CD8-positive, alpha-beta T cell (primary cell): ENCODE measurements at regions of chr13 and their contacts with region 1.

Region 1: GRCh38 chr13:48492470-48493065 is 40.3 kb downstream of the RCBTB2 start:
- DNase-seq: peak; percentile 27 to 92 (median 73)
- ATAC-seq: peak; percentile 82
- H3K4me3 ChIP-seq: peak overlapping the region; percentile 48 to 60
- H3K4me3 Mint-ChIP-seq: no peak overlapping the region
- H3K27ac ChIP-seq: peak overlapping the region; percentile 63 to 86
- H3K27ac Mint-ChIP-seq: no peak overlapping the region
- H3K4me1 ChIP-seq: peaks cover 58% of the 10 kb centered on the region
- H3K4me1 Mint-ChIP-seq: peaks cover 39% of the 10 kb centered on the region
- H3K27me3 ChIP-seq: no peaks in the 10 kb centered on the region
- H3K27me3 Mint-ChIP-seq: no peaks in the 10 kb centered on the region
- CTCF ChIP-seq: no peak

Region 2: DNA sequence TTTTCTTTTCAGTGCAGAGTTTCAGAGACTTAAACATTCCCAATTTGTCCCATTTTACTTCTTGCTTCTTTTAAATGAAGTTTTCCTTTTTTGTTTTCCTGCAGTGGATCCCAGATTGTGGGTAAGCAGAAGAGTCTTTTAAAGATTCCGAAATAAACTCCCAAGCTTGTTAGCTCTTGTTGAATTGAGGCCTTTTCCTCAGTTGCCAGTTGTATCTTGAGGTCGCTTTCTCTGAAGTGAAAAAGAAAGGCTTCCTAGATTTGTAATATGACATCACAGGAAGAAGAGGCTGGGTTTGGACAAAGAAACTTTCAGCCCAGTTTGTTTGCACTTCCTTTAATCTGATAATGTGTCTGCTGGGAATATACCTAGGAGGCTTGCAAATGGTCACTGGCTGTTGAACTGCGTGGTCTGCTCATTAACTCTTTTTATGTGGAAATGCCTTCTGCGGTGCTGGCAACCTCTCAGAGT is 79.7 kb before region 1 on chr13 and contains the start of gene LPAR6:
- CTCF ChIA-PET with region 1: no interaction called
- POLR2A ChIA-PET with region 1: no interaction called
- intact Hi-C with region 1: loop called (anchors 1 to 5 kb)
- DNase-seq: peak in 2 of 9 experiments; percentile 51 to 74
- ATAC-seq: peak; percentile 26
- H3K4me3 ChIP-seq: peak within 1 kb of the TSS; percentile 38 to 67
- H3K4me3 Mint-ChIP-seq: peak within 1 kb of the TSS; percentile 98
- H3K27ac ChIP-seq: peak within 1 kb of the TSS; percentile 24 to 83
- H3K27ac Mint-ChIP-seq: peak within 1 kb of the TSS; percentile 98
- H3K4me1 ChIP-seq: peaks cover 4% of the 10 kb centered on the region
- H3K4me1 Mint-ChIP-seq: peaks cover 42% of the 10 kb centered on the region
- H3K27me3 ChIP-seq: no peaks in the 10 kb centered on the region
- H3K27me3 Mint-ChIP-seq: no peaks in the 10 kb centered on the region
- CTCF ChIP-seq: no peak
- total RNA-seq, gene LPAR6: 5.4 to 5.7 TPM

Region 3: DNA sequence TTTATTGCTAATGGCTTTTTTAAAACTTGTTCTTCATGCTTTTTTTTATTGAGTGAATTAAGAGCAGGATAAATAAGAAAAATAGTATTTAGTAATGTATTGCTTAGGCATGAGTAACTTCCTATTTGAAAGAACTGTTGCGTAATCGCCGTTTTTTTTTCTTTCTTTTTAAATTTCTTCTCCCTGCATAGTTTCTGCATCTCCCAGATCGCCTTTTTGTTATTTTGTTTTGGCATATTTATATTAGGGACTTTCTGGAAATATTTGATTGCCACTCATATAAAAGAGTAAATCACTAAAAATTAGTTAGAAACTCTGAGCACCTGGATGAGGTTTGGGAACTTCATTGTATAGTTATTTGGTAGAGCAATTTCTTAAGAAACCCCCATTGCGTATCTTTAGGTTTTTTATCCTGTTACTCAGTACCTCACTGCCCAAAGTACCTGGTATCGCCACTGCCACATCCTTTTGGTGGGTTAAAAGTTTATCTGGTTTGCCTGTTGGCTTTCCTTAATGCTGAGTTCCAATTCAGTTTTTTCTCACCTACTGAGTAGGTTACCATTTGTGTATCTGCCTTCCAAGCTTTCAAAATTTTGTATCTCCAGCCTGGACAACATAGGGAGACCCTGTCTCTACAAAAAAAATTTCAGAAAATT is 43.5 kb before region 1 on chr13:
- CTCF ChIA-PET with region 1: no interaction called
- POLR2A ChIA-PET with region 1: interaction called, 3 read pairs
- intact Hi-C with region 1: loop called in 1 of 2 experiments (anchors 2 kb)
- DNase-seq: peak in 1 of 9 experiments; percentile 11
- ATAC-seq: no peak
- H3K4me3 ChIP-seq: no peak overlapping the region
- H3K4me3 Mint-ChIP-seq: peak overlapping the region; percentile 46
- H3K27ac ChIP-seq: no peak overlapping the region
- H3K27ac Mint-ChIP-seq: no peak overlapping the region
- H3K4me1 ChIP-seq: no peaks in the 10 kb centered on the region
- H3K4me1 Mint-ChIP-seq: peaks cover 18% of the 10 kb centered on the region
- H3K27me3 ChIP-seq: no peaks in the 10 kb centered on the region
- H3K27me3 Mint-ChIP-seq: no peaks in the 10 kb centered on the region
- CTCF ChIP-seq: no peak

Region 4: GRCh38 chr13:48505597-48506091 is 13.1 kb after region 1 on chr13:
- CTCF ChIA-PET with region 1: interaction called, 7 read pairs
- POLR2A ChIA-PET with region 1: interaction called, 17 read pairs
- intact Hi-C with region 1: loop called in 1 of 2 experiments (anchors 1 kb)
- DNase-seq: peak in 8 of 9 experiments; percentile 36 to 92 (median 58)
- ATAC-seq: peak; percentile 92
- H3K4me3 ChIP-seq: no peak overlapping the region
- H3K4me3 Mint-ChIP-seq: peak overlapping the region; percentile 65
- H3K27ac ChIP-seq: peak overlapping the region; percentile 36 to 76
- H3K27ac Mint-ChIP-seq: peak overlapping the region; percentile 89
- H3K4me1 ChIP-seq: peaks cover 29% of the 10 kb centered on the region
- H3K4me1 Mint-ChIP-seq: peaks cover 51% of the 10 kb centered on the region
- H3K27me3 ChIP-seq: no peaks in the 10 kb centered on the region
- H3K27me3 Mint-ChIP-seq: no peaks in the 10 kb centered on the region
- CTCF ChIP-seq: no peak

Region 5: GRCh38 chr13:48562296-48563066 is 69.9 kb after region 1 on chr13:
- CTCF ChIA-PET with region 1: no interaction called
- POLR2A ChIA-PET with region 1: interaction called, 4 read pairs
- intact Hi-C with region 1: loop called in 1 of 2 experiments (anchors 1 kb)
- DNase-seq: peak; percentile 27 to 93 (median 66)
- ATAC-seq: peak; percentile 98
- H3K4me3 ChIP-seq: no peak overlapping the region
- H3K4me3 Mint-ChIP-seq: peak overlapping the region; percentile 43
- H3K27ac ChIP-seq: peak overlapping the region in 1 of 2 experiments; percentile 3
- H3K27ac Mint-ChIP-seq: no peak overlapping the region
- H3K4me1 ChIP-seq: peaks cover 27% of the 10 kb centered on the region
- H3K4me1 Mint-ChIP-seq: peaks cover 33% of the 10 kb centered on the region
- H3K27me3 ChIP-seq: no peaks in the 10 kb centered on the region
- H3K27me3 Mint-ChIP-seq: peaks cover 43% of the 10 kb centered on the region
- CTCF ChIP-seq: no peak

Region 6: GRCh38 chr13:48580185-48580803 is 87.7 kb after region 1 on chr13:
- CTCF ChIA-PET with region 1: interaction called, 3 read pairs
- POLR2A ChIA-PET with region 1: no interaction called
- intact Hi-C with region 1: loop called in 1 of 2 experiments (anchors 5 kb)
- DNase-seq: peak; percentile 50 to 82 (median 79)
- ATAC-seq: peak; percentile 79
- H3K4me3 ChIP-seq: no peak overlapping the region
- H3K4me3 Mint-ChIP-seq: no peak overlapping the region
- H3K27ac ChIP-seq: no peak overlapping the region
- H3K27ac Mint-ChIP-seq: no peak overlapping the region
- H3K4me1 ChIP-seq: no peaks in the 10 kb centered on the region
- H3K4me1 Mint-ChIP-seq: peaks cover 3% of the 10 kb centered on the region
- H3K27me3 ChIP-seq: no peaks in the 10 kb centered on the region
- H3K27me3 Mint-ChIP-seq: peaks cover 30% of the 10 kb centered on the region
- CTCF ChIP-seq: peak; percentile 85

Region 7: GRCh38 chr13:48653472-48653939 is 160.9 kb after region 1 on chr13 and contains the start of gene CYSLTR2:
- CTCF ChIA-PET with region 1: no interaction called
- POLR2A ChIA-PET with region 1: no interaction called
- intact Hi-C with region 1: loop called in 1 of 2 experiments (anchors 10 kb)
- DNase-seq: peak in 3 of 9 experiments; percentile 26 to 91 (median 84)
- ATAC-seq: peak; percentile 88
- H3K4me3 ChIP-seq: peak within 1 kb of the TSS; percentile 42 to 45
- H3K4me3 Mint-ChIP-seq: peak within 1 kb of the TSS; percentile 81
- H3K27ac ChIP-seq: peak within 1 kb of the TSS; percentile 78 to 85
- H3K27ac Mint-ChIP-seq: peak within 1 kb of the TSS; percentile 91
- H3K4me1 ChIP-seq: peaks cover 24% of the 10 kb centered on the region
- H3K4me1 Mint-ChIP-seq: peaks cover 36% of the 10 kb centered on the region
- H3K27me3 ChIP-seq: no peaks in the 10 kb centered on the region
- H3K27me3 Mint-ChIP-seq: no peaks in the 10 kb centered on the region
- CTCF ChIP-seq: no peak
- total RNA-seq, gene CYSLTR2: 1.8 to 2.1 TPM